Panc1 (cell line): ENCODE measurements at regions of chr5 and their contacts with region 1.

Region 1: DNA sequence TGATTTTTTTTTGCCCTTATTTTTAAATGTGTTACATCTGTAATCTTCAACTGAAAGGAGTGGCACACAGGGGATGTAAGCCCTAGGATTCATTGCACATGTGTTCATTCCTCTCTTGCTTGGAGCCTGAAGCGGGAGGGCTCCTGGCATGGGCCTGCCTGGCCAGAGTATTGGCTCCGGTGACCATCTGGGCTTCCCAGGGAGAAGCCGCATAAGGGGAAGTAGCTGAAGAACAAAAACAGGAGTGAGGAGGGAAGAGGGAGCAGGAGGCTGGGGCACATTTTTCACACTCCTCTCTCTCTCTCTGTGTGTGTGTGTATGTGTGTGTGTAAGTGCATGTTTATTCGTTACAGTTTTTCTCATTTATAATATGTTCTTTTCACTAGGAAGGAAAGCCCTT is 269.9 kb downstream of the PRR16 start:
- DNase-seq: no peak
- ATAC-seq: no peak
- H3K4me3 ChIP-seq: no peak overlapping the region
- H3K27ac ChIP-seq: no peak overlapping the region
- H3K4me1 ChIP-seq: no peaks in the 10 kb centered on the region
- H3K27me3 ChIP-seq: no peaks in the 10 kb centered on the region
- CTCF ChIP-seq: no peak

Region 2: DNA sequence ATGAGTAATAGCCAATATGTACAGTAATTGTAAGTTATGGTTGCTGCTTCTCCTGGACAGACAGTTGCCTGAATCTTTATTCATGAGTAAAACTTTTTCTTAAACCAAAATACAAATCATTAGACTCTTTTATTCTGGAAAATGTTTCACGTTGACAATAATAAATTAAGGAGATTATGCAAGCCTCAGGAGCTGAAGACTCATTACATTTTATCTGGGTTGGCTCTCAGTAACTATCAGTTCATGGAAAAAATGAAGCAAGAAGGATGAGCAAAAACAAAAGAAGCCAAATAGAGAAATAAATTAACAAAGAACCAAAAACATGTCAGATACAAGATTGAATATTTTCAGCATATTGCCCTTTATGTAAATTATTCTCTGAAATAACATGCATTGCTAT is 358.8 kb before region 1 on chr5:
- CTCF ChIA-PET with region 1: no interaction called
- POLR2A ChIA-PET with region 1: no interaction called
- in situ Hi-C with region 1: no loop called
- intact Hi-C with region 1: no loop called
- DNase-seq: no peak
- ATAC-seq: no peak
- H3K4me3 ChIP-seq: no peak overlapping the region
- H3K27ac ChIP-seq: no peak overlapping the region
- H3K4me1 ChIP-seq: no peaks in the 10 kb centered on the region
- H3K27me3 ChIP-seq: no peaks in the 10 kb centered on the region
- CTCF ChIP-seq: no peak

Region 3: DNA sequence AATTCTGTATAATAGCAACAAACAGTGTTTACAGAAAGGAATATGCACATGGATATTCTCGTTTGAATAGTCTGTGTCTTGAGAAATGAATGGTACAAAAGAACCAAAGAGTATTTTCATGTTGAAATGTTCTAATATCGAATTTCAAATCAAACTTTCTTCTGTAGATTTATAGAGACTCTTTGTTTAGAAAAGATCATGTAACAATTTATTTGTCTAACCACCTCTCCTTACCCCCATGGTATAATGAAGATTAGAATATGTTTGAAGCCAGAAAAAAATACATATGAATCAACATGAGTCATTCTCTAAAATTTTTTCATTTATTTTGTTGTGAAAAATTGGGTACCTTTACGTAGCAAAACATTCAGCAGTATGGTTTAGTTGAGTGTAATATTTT is 15.7 kb after region 1 on chr5:
- CTCF ChIA-PET with region 1: no interaction called
- POLR2A ChIA-PET with region 1: no interaction called
- in situ Hi-C with region 1: no loop called
- intact Hi-C with region 1: no loop called
- DNase-seq: no peak
- ATAC-seq: no peak
- H3K4me3 ChIP-seq: no peak overlapping the region
- H3K27ac ChIP-seq: no peak overlapping the region
- H3K4me1 ChIP-seq: no peaks in the 10 kb centered on the region
- H3K27me3 ChIP-seq: no peaks in the 10 kb centered on the region
- CTCF ChIP-seq: no peak

Region 4: DNA sequence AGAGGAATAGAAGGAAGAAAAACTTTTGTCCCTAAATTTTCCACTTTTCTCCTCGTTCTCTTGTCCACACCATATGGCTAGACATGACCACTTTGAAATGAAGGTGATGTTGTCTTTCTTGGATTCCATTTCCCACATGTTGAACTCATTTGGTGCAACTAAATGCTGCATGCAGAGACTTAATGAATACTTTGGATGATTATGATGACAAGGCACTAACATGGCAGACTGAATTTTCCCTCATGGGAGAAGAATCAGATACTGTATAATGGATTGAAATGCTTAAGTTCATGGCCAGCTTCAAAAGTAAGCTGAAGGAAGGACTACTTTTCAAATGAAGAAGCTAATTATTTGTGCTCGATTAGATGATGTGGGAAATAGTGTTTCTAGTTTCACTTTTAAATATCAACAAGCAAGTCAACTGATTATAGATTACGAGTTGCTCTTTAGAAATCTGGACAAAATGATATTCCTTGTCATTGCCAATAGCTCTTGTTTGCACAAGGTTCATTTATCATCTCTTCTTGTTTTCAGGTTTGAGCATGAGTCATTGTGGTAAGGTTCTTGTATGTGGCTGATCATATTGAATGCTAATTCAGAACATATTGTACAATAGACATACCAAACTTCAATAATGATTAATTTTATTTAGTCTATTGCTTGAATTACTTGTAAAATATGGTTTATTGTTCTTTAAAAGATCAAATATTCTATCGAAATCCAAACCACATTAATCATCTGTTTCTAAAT is 616.3 kb after region 1 on chr5:
- CTCF ChIA-PET with region 1: no interaction called
- POLR2A ChIA-PET with region 1: no interaction called
- in situ Hi-C with region 1: no loop called
- intact Hi-C with region 1: loop called (anchors 5 kb)
- DNase-seq: no peak
- ATAC-seq: no peak
- H3K4me3 ChIP-seq: no peak overlapping the region
- H3K27ac ChIP-seq: no peak overlapping the region
- H3K4me1 ChIP-seq: no peaks in the 10 kb centered on the region
- H3K27me3 ChIP-seq: no peaks in the 10 kb centered on the region
- CTCF ChIP-seq: no peak